Thyroid gland (tissue), 4 donors: ENCODE measurements at regions of chr11 and their contacts with region 1.

Region 1: DNA sequence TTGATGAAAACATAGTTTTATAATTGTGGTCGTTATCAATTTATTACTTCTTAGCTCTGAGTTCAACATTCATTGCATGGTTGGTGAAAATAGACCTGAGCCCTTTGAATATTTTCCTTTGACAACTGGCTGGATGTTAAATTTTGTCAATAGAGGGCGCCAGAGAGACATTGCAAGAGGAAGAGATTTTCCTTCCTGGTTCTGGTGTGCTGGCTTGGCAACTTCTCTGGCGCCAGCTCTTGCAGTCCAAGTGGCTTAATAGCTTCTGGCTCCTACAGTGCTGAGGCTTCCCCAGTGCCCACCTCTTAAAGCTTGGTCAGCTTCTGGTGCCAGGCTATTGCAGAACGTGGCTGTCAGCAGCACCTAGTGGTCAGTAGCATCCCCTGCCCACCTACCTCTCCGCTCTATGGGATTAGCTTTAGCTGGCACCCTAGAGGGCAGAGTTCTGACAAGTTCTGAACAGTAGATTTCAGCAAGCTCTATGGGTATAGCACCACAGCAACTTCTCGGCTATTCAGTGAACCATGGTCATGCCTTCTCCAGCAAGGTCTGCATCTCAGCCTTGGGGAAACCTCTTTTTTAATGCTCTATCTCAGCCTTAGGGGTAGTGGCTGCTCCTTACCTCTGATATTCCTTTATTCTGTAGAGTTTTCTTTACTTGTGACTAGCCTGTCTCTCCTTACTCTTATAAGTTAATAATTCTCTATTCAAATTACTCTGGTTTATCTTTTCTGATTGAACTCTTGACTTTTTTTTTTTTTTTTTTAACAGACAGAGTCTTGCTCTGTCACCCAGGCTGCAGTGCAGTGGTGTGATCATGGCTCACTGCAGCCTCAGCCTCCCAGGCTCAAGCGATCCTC is 59.4 kb downstream of the ACER3 start:
- DNase-seq: peak; percentile 88 to 92
- H3K4me3 ChIP-seq: no peak overlapping the region
- H3K27ac ChIP-seq: peak overlapping the region in 1 of 3 donors; percentile 12
- H3K4me1 ChIP-seq: peaks cover 0 to 8% of the 10 kb centered on the region in 2 donors
- H3K27me3 ChIP-seq: no peaks in the 10 kb centered on the region
- CTCF ChIP-seq: peak; percentile 83 to 95 (median 89)
- POLR2A ChIP-seq: no peak

Region 2: DNA sequence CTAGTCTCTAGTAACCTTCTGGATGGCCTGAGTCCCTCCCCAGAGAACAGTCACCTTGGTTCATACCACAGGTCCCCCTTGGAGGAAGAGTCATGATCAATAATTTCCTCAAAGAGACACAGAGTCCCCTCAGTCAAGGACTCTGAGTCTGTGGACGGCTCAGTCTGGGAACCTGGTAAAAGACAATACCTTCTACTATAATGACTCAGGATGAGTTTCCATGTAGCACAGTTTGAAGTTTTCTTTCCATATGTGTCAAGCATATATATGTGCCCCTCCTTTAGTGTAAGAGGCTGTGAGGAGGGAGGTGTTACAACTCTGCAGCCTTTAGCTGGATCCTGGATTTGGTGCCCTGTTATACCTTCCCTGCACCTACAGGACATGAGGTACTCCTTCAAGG is 191.3 kb before region 1 on chr11:
- intact Hi-C with region 1: loop called (anchors 5 kb)
- DNase-seq: no peak
- H3K4me3 ChIP-seq: no peak overlapping the region
- H3K27ac ChIP-seq: no peak overlapping the region
- H3K4me1 ChIP-seq: no peaks in the 10 kb centered on the region
- H3K27me3 ChIP-seq: no peaks in the 10 kb centered on the region
- CTCF ChIP-seq: no peak
- POLR2A ChIP-seq: no peak

Region 3: GRCh38 chr11:76807206-76807875 is 112.8 kb before region 1 on chr11:
- intact Hi-C with region 1: loop called (anchors 5 kb)
- DNase-seq: peak; percentile 85 to 90
- H3K4me3 ChIP-seq: no peak overlapping the region
- H3K27ac ChIP-seq: peak overlapping the region in 1 of 3 donors; percentile 20
- H3K4me1 ChIP-seq: peaks cover 5 to 18% of the 10 kb centered on the region in 2 donors
- H3K27me3 ChIP-seq: no peaks in the 10 kb centered on the region
- CTCF ChIP-seq: peak; percentile 54 to 78 (median 69)
- POLR2A ChIP-seq: no peak

Region 4: GRCh38 chr11:76860539-76861475 is 59.3 kb before region 1 on chr11 and contains the start of gene ACER3:
- intact Hi-C with region 1: loop called (anchors 10 kb)
- DNase-seq: peak; percentile 97
- H3K4me3 ChIP-seq: peak within 1 kb of the TSS; percentile 21 to 91 (median 64)
- H3K27ac ChIP-seq: peak within 1 kb of the TSS; percentile 61 to 86 (median 66)
- H3K4me1 ChIP-seq: peaks cover 16% of the 10 kb centered on the region in 2 donors
- H3K27me3 ChIP-seq: no peaks in the 10 kb centered on the region
- CTCF ChIP-seq: peak in 2 of 6 experiments; percentile 11 to 14
- POLR2A ChIP-seq: peak; percentile 70 to 97
- total RNA-seq, gene ACER3: 11.5 to 29.3 (median 17.9) TPM

Region 5: GRCh38 chr11:77039491-77040400 is 119.6 kb after region 1 on chr11:
- intact Hi-C with region 1: no loop called
- DNase-seq: peak; percentile 11 to 18
- H3K4me3 ChIP-seq: peak overlapping the region in 1 of 3 donors; percentile 21
- H3K27ac ChIP-seq: no peak overlapping the region
- H3K4me1 ChIP-seq: peaks cover 6 to 8% of the 10 kb centered on the region in 2 donors
- H3K27me3 ChIP-seq: peaks cover 13% of the 10 kb centered on the region
- CTCF ChIP-seq: peak in 2 of 6 experiments; percentile 10 to 27
- POLR2A ChIP-seq: no peak

Region 6: GRCh38 chr11:77278595-77279506 is 358.7 kb after region 1 on chr11:
- intact Hi-C with region 1: no loop called
- DNase-seq: no peak
- H3K4me3 ChIP-seq: no peak overlapping the region
- H3K27ac ChIP-seq: no peak overlapping the region
- H3K4me1 ChIP-seq: no peaks in the 10 kb centered on the region
- H3K27me3 ChIP-seq: no peaks in the 10 kb centered on the region
- CTCF ChIP-seq: no peak
- POLR2A ChIP-seq: no peak